ENCODE measurements at regions of chr17 and their contacts with region 1.

Region 1: DNA sequence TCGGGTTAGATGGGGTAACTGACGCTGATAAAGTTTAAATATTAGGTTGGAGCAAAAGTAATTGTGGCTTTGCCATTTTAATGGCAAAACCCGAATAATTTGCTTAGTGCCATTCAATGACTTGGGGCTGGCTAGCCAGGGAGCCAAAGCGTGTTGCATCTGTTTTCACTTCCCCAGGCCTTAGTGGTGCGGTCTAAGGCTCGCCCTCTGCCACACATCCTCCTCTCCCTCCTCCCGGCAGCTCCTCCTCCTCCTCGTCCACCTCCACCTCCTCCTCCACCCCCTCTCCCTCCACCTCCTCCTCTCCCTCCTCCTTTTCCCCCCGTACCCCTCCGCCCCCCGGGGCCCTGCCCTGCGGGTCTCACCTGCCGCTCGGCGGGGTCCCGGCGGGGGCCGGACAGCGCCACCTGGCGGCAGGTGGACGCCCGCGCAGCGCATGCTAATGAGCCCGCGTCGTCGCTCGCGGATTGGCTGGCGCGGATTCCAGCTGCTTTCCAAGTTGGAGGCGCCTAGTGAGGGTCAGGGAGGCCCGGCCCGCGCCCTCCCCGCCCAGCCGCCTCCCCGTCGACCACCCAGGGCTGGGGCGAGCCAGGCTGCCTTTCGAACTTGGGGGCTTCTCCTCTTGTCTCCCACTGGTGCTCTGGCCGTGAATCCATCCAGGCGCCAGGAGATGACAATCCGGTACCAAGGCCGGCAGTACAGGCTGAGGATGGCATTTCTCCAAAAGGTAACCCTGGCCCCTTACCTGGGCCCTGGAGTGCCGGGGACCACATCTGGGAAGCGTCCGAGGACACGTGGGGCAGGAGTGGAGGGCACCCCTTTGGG is 36.6 kb upstream of the RGS9 start:
- DNase-seq: peak; percentile 86 to 90
- H3K4me3 ChIP-seq: peak overlapping the region in 2 of 3 donors; percentile 22 to 36
- H3K27ac ChIP-seq: peak overlapping the region; percentile 9 to 71 (median 56)
- H3K4me1 ChIP-seq: peaks cover 14 to 22% of the 10 kb centered on the region in 2 donors
- H3K27me3 ChIP-seq: no peaks in the 10 kb centered on the region
- CTCF ChIP-seq: peak; percentile 62 to 99 (median 92)
- POLR2A ChIP-seq: peak in 1 of 2 donors; percentile 46

Region 2: DNA sequence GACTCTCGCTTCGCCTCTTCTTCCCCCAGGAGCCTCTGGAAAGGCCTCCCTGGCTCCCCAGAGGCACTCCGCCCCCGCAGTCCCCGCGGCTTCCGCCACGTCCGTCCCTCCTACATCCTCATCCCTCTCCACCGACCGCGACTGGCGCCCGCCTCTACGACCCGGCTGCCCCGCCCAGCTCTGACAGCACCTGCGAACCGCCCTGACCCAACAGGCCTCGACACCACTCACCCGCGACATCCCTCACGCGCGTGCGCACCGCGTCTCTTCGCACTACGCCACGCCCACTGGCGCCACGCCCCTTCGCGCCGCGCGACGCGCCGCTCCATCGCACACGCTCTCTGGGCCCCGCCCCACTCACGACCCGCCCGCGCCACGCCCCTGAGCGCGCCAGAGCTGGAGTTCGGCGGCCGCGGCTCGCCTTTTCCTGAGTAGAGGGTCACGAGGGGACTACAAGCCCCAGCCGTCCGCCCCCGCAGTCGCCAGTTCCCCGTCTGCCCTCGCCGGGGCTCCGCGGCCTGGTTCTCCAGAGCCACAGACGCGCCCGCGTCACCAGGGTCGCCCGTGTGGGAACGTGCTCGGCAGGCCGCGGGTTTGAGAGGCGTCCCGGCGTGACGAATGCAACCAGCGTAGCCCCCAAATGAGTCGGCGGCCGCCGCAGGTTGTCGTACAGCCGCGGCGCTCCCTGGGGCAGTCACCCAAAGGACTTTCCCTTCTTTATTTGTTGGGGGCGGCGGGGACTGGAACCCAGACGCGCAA is 125.0 kb before region 1 on chr17:
- intact Hi-C with region 1: loop called (anchors 5 kb)
- DNase-seq: peak; percentile 95
- H3K4me3 ChIP-seq: peak overlapping the region; percentile 47 to 91 (median 76)
- H3K27ac ChIP-seq: peak overlapping the region; percentile 97 to 100 (median 99)
- H3K4me1 ChIP-seq: peaks cover 12 to 18% of the 10 kb centered on the region in 2 donors
- H3K27me3 ChIP-seq: no peaks in the 10 kb centered on the region
- CTCF ChIP-seq: peak in 1 of 6 experiments; percentile 2
- POLR2A ChIP-seq: peak; percentile 74 to 96

Region 3: DNA sequence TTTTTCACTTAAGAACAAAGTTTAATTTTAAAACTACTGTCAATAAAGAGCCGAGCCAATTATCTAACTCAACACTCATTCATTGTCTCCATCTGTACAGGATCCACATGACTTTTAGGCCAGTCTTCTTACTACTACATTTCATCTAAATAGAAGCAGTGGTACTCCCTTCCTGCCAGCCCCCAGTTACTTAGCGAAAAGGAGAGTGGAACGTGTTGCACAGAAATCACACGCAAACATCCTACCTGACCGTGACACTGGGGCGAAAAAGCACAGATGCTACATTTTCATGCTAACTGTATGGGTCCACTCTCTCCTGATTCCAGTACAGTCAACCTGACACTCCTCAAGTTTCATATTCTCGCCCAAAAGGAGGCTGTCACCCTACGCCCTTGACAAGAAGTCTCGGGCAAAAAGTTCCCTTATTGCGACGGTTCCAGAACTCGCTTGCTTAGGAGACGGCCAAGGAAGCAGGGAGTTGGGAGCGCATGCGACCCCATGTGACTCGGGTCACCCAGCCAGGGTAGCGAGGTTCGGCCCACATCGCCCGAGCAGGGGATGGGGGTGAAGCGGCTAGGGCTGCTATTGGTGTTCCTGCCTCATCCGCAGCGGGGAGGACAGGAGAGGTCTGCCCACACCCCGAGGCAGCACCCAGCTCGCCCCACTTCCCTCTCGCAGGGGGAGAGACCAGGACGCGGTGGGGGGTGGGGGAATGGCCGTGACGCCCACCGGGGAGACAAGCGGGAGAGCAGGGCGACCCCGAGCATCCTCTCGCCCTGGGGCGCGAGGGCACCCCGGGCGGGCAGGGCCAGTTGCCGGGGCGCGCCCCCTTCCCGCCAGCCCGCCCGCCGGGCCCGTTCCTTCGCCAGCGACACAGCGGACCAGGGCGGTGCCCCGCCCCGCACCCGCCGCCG is 44.9 kb before region 1 on chr17:
- intact Hi-C with region 1: loop called (anchors 5 kb)
- DNase-seq: peak; percentile 72 to 73
- H3K4me3 ChIP-seq: peak overlapping the region; percentile 87 to 92 (median 87)
- H3K27ac ChIP-seq: peak overlapping the region; percentile 93 to 100 (median 97)
- H3K4me1 ChIP-seq: peaks cover 25 to 40% of the 10 kb centered on the region in 2 donors
- H3K27me3 ChIP-seq: no peaks in the 10 kb centered on the region
- CTCF ChIP-seq: no peak
- POLR2A ChIP-seq: peak in 1 of 2 donors; percentile 71

Region 4: DNA sequence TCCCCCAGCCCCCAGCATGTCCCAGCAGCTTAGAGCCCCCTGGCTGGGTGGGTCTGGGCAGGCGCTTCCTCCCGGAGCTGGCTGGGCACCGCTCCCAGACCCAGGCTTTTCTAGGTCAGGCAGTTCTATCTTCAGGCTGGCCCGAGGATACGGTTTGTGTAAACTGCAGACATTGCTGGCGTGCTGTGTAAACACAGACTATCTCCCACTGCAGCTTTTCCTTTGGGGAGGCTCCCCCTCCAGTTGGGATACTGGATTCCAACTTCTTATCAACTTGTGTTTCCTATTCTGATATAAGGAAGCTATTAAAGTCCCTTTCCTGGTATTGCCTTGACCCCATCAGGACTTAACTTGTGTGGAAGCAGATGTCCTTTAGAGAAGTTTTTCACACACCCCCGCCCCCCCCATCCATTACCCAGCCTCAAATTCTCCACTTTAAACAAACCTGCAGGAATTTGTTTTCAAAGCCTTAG is 25.7 kb before region 1 on chr17:
- intact Hi-C with region 1: no loop called
- DNase-seq: peak; percentile 77 to 82
- H3K4me3 ChIP-seq: no peak overlapping the region
- H3K27ac ChIP-seq: peak overlapping the region; percentile 27 to 59 (median 57)
- H3K4me1 ChIP-seq: peaks cover 14 to 17% of the 10 kb centered on the region in 2 donors
- H3K27me3 ChIP-seq: no peaks in the 10 kb centered on the region
- CTCF ChIP-seq: peak in 1 of 6 experiments; percentile 8
- POLR2A ChIP-seq: no peak